ENCODE measurements at regions of chr9 and their contacts with region 1.

Region 1: GRCh38 chr9:78515108-78515507 is 218.2 kb downstream of the PSAT1 start:
- DNase-seq: no peak
- ATAC-seq: no peak
- H3K4me3 ChIP-seq: no peak overlapping the region
- H3K27ac ChIP-seq: no peak overlapping the region
- H3K4me1 ChIP-seq: no peaks in the 10 kb centered on the region
- H3K27me3 ChIP-seq: peaks cover 2% of the 10 kb centered on the region; the same call in 1 of the 2 replicates
- CTCF ChIP-seq: no peak
- POLR2A ChIP-seq: no peak
- RAD21 ChIP-seq: no peak

Region 2: DNA sequence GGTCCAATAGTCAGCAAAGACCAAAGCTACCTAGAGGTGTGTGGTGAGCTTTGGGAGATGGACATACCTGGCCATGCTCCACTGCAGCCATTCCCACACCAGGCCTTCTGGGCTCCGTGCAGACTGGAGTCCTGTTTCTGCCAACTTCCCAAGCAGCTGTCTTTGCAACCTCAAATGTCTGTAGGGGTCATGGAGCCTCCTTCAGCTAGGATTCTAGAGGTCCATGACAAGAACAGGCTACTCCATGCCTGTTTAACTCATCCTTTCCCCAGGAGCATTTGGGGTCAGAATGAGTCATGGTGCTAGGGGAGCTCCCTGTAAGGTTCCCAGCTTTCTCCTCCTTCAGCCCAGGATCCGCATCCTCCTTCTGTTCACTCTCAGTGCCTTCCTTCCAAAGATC is 1320.7 kb before region 1 on chr9:
- CTCF ChIA-PET with region 1: no interaction called
- POLR2A ChIA-PET with region 1: no interaction called
- dilution Hi-C with region 1: no loop called
- in situ Hi-C with region 1: no loop called
- intact Hi-C with region 1: no loop called
- DNase-seq: peak; percentile 37
- ATAC-seq: peak; percentile 32; the same call in 1 of the 2 replicates
- H3K4me3 ChIP-seq: no peak overlapping the region
- H3K27ac ChIP-seq: no peak overlapping the region
- H3K4me1 ChIP-seq: peaks cover 1% of the 10 kb centered on the region
- H3K27me3 ChIP-seq: no peaks in the 10 kb centered on the region
- CTCF ChIP-seq: no peak
- POLR2A ChIP-seq: no peak
- RAD21 ChIP-seq: no peak

Region 3: GRCh38 chr9:78468231-78468630 is 46.9 kb before region 1 on chr9:
- CTCF ChIA-PET with region 1: no interaction called
- POLR2A ChIA-PET with region 1: no interaction called
- dilution Hi-C with region 1: no loop called
- in situ Hi-C with region 1: loop called (anchors 5 kb)
- intact Hi-C with region 1: no loop called
- DNase-seq: no peak
- ATAC-seq: no peak
- H3K4me3 ChIP-seq: no peak overlapping the region
- H3K27ac ChIP-seq: no peak overlapping the region
- H3K4me1 ChIP-seq: no peaks in the 10 kb centered on the region
- H3K27me3 ChIP-seq: peaks cover 2% of the 10 kb centered on the region
- CTCF ChIP-seq: no peak
- POLR2A ChIP-seq: no peak
- RAD21 ChIP-seq: no peak